Activated CD4-positive, alpha-beta T cell treated with anti-CD3 and anti-CD28 coated beads, Interleukin-2, amount 10 ng/mL, durations not matched to agents 24 days and 14 days (primary cell): ENCODE measurements at regions of chr2 and their contacts with region 1.

Region 1: DNA sequence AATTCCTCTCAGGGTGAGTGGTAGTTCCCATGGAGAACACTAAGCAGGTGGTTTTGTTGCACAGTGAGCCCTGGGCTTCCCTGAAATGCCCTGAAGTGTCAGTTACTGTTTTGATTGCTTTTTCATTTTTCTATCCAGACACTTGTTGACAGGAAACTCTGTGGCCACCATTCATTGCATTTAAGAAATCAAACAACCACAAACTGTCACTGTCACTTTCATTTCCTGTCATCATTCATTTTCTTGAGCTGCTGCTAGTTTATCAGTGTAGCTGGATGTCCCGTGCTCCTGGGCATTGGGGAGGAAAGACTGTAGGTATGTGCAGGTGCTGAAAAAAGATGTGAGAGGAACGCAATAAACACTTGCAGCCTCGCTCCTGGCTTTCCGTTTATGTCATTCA is 891.6 kb upstream of the ZEB2 start:
- DNase-seq: peak; percentile 83
- H3K4me3 Mint-ChIP-seq: peak overlapping the region; percentile 31
- H3K27ac Mint-ChIP-seq: peak overlapping the region; percentile 32
- H3K4me1 Mint-ChIP-seq: peaks cover 25% of the 10 kb centered on the region
- H3K27me3 Mint-ChIP-seq: peaks cover 58% of the 10 kb centered on the region

Region 2: GRCh38 chr2:145199042-145199441 is 212.5 kb before region 1 on chr2:
- intact Hi-C with region 1: no loop called
- DNase-seq: no peak
- H3K4me3 Mint-ChIP-seq: no peak overlapping the region
- H3K27ac Mint-ChIP-seq: no peak overlapping the region
- H3K4me1 Mint-ChIP-seq: no peaks in the 10 kb centered on the region
- H3K27me3 Mint-ChIP-seq: no peaks in the 10 kb centered on the region

Region 3: DNA sequence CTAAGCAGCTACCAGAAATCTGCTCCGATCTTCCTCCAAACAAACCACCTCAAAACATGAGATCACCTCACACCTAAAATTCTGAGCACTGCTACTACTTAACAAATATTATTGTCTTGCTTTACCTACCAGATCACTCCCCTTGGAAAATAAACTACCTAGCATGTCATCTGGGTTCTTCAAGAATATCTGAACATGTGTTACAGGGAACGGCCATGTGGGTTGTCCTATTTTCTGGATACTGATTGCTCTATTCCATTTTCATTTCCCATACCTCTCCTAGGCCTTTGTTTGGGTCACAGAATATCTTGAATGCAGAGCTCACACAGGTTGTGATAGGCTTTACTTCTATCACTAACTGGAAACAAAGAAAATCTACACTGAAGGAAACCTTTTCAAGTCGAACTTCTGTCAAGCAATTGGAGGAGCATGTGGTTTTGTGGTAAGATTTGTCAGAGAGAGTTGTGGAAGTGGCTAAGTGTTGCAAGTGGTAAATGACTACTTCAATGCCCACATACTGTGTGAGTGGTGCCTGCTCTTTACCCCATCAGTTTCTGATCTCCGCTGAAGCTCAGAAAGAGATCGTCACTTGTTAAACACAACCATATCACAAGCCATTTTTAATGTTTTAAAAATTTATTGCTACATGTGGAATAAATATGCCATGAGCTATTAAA is 152.5 kb before region 1 on chr2:
- intact Hi-C with region 1: loop called (anchors 5 kb)
- DNase-seq: peak; percentile 71
- H3K4me3 Mint-ChIP-seq: no peak overlapping the region
- H3K27ac Mint-ChIP-seq: no peak overlapping the region
- H3K4me1 Mint-ChIP-seq: peaks cover 9% of the 10 kb centered on the region
- H3K27me3 Mint-ChIP-seq: peaks cover 29% of the 10 kb centered on the region

Region 4: GRCh38 chr2:145323512-145323911 is 88.0 kb before region 1 on chr2:
- intact Hi-C with region 1: loop called (anchors 1 kb)
- DNase-seq: peak; percentile 62
- H3K4me3 Mint-ChIP-seq: no peak overlapping the region
- H3K27ac Mint-ChIP-seq: peak overlapping the region; percentile 0
- H3K4me1 Mint-ChIP-seq: peaks cover 15% of the 10 kb centered on the region
- H3K27me3 Mint-ChIP-seq: peaks cover 18% of the 10 kb centered on the region

Region 5: GRCh38 chr2:145511946-145512345 is 100.5 kb after region 1 on chr2:
- intact Hi-C with region 1: no loop called
- DNase-seq: no peak
- H3K4me3 Mint-ChIP-seq: no peak overlapping the region
- H3K27ac Mint-ChIP-seq: no peak overlapping the region
- H3K4me1 Mint-ChIP-seq: no peaks in the 10 kb centered on the region
- H3K27me3 Mint-ChIP-seq: no peaks in the 10 kb centered on the region

Region 6: DNA sequence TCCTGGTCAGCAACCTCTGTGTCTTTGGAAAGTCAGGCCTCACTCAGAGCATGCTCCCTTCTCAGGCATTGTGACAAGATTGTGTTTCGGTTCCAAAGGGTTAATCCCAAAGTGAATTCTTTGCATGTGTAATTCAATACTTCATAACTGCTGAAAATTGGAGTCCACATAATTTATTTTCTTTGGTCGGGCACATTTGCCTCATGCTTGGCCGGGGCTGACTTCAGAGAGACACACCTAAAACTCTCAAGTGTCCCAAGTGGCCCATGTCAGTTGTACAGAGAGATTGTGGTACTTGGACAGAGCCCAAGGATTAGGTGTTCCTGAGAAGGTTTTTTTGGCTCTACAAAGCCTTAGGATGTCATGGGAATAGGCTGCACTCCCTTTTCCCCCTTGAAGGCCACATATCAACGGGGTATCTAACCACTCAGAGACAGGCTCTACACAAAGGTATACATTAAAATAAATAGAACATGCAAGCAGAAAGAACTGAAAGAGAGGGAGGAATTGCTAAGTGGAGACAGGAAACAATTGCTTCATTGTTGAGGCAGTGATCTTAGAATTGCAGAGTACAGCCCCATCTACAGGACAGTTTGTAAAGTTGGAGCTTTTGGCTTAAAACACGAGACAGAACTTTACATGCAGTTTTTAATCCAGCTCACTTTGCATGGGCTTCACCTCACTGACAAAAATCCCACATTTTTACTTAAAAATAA is 340.8 kb after region 1 on chr2:
- intact Hi-C with region 1: loop called (anchors 2 kb)
- DNase-seq: no peak
- H3K4me3 Mint-ChIP-seq: no peak overlapping the region
- H3K27ac Mint-ChIP-seq: no peak overlapping the region
- H3K4me1 Mint-ChIP-seq: peaks cover 10% of the 10 kb centered on the region
- H3K27me3 Mint-ChIP-seq: no peaks in the 10 kb centered on the region